ENCODE measurements at regions of chr9 and their contacts with region 1.

Region 1: GRCh38 chr9:5557606-5558587 is 47.6 kb downstream of the PDCD1LG2 start:
- DNase-seq: peak; percentile 48
- H3K4me3 Mint-ChIP-seq: peak overlapping the region; percentile 4
- H3K27ac Mint-ChIP-seq: peak overlapping the region; percentile 84
- H3K4me1 Mint-ChIP-seq: peaks cover 32% of the 10 kb centered on the region
- H3K27me3 Mint-ChIP-seq: no peaks in the 10 kb centered on the region

Region 2: DNA sequence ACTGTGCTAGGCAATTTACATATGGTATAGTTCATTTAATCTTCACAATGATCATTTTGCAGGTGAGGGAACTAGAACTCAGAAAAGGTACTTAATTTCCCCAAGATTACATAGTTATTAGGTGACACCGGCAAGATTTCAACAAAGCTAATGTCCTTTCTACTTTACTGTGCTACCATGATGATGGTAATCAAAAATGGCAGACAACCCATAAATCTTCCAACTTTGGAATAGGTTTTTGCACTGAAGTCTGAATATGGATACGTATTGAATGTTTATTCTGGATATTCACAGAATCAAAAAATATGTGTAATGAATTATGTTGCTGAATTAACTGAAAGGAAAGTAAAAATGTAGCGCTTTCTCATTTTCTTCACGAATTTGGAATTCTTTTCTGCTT is 33.8 kb before region 1 on chr9:
- intact Hi-C with region 1: loop called (anchors 5 kb)
- DNase-seq: no peak
- H3K4me3 Mint-ChIP-seq: no peak overlapping the region
- H3K27ac Mint-ChIP-seq: no peak overlapping the region
- H3K4me1 Mint-ChIP-seq: peaks cover 6% of the 10 kb centered on the region
- H3K27me3 Mint-ChIP-seq: no peaks in the 10 kb centered on the region

Region 3: DNA sequence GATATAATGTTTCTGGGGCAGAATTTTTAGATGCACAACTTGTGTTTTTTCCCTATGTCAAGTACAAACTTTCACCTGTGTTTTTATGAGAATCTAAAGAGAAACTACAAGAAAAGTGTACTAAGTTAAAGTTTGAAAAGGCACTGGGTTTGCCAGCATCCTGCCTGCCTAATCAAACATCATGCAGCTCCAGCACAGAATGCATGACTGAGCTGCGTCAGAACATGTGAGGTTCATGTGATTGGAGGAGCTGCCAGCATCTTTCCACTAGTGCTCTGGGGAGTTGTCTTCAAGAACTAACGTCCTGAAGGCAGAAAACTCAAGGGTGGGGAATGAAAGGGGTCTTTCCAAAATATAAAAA is 24.9 kb after region 1 on chr9:
- intact Hi-C with region 1: loop called (anchors 2 kb)
- DNase-seq: peak; percentile 46
- H3K4me3 Mint-ChIP-seq: no peak overlapping the region
- H3K27ac Mint-ChIP-seq: peak overlapping the region; percentile 88
- H3K4me1 Mint-ChIP-seq: peaks cover 69% of the 10 kb centered on the region
- H3K27me3 Mint-ChIP-seq: no peaks in the 10 kb centered on the region

Region 4: GRCh38 chr9:5749306-5749705 is 191.4 kb after region 1 on chr9:
- intact Hi-C with region 1: no loop called
- DNase-seq: no peak
- H3K4me3 Mint-ChIP-seq: no peak overlapping the region
- H3K27ac Mint-ChIP-seq: peak overlapping the region; percentile 44
- H3K4me1 Mint-ChIP-seq: peaks cover 22% of the 10 kb centered on the region
- H3K27me3 Mint-ChIP-seq: no peaks in the 10 kb centered on the region